ENCODE measurements at regions of chr17 and their contacts with region 1.

Region 1: DNA sequence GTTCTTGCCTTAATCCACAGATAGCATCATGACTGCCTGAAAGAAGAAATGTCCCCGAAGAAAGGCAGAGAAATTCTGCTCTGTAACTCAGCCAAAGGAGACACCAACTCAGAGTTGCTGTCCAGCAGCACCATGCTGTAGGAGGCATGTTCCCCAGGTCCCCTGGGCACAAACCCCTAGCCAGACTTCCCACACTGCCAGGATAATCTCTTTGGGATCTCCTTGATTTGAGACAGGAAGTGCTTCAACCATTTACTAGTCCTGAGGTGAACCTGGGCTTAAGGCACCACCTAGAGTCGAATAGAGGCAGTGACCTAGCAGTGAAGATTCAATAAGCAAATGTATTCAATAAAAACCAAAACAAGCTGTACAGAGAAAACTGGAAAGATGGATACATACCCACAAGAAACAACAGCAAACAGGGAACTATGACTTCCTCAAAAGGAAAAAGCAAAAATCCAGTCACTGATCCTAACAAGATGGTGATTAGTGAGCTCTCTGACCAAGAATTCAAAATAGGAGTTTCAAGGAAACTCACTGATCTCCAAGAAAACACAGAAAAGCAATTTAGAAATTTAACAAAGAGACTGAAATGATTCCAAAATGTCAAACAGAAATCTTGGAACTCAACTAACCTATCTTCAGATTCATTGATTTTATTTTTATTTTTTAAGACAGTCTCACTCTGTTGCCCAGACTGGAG is 5.7 kb downstream of the OR4D2 start:
- DNase-seq: no peak
- H3K4me3 ChIP-seq: no peak overlapping the region
- H3K27ac ChIP-seq: no peak overlapping the region
- H3K4me1 ChIP-seq: no peaks in the 10 kb centered on the region
- H3K27me3 ChIP-seq: peaks cover 0 to 20% of the 10 kb centered on the region in 2 donors
- CTCF ChIP-seq: peak in 1 of 3 donors; percentile 27
- POLR2A ChIP-seq: no peak

Region 2: DNA sequence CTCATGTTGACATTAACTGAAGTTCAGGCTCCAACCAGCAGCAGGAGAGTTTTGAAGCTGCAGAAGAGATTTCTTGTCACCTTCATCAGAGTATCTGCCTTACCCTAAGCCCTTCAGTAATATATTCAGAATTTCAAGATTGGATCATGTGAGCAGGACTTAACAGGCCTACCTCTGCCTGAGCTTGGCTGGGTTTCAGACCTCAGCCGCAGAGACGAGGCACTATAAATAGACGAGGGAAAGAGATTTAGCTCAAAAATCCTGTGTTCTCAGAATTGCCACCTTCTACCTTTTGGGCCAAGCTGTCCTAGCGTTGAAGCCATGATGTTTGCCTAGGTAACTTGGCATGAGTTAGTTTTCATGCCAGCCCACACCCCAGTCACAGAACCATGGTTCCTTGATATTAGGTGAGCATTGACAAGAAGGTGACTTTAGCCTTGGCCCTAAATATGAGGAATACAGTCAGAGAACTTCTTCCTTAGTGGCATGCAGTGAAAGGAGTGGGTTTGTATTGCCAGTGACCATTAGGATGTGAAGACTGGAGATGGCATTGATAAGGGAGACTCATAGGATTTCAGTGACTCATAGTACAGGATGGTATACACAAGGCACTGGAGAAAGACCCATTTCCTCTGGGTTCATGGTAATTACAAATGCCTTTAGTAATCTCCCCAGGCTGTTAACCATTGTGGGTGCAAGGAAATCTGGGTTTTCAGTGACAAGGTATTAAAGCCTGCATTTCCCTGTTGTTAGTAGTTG is 691.9 kb before region 1 on chr17:
- intact Hi-C with region 1: no loop called
- DNase-seq: peak in 1 of 2 donors; percentile 48
- H3K4me3 ChIP-seq: no peak overlapping the region
- H3K27ac ChIP-seq: peak overlapping the region; percentile 22 to 59
- H3K4me1 ChIP-seq: peaks cover 4 to 15% of the 10 kb centered on the region in 2 donors
- H3K27me3 ChIP-seq: no peaks in the 10 kb centered on the region
- CTCF ChIP-seq: no peak
- POLR2A ChIP-seq: no peak

Region 3: GRCh38 chr17:57499648-57500049 is 672.9 kb before region 1 on chr17:
- intact Hi-C with region 1: no loop called
- DNase-seq: no peak
- H3K4me3 ChIP-seq: no peak overlapping the region
- H3K27ac ChIP-seq: no peak overlapping the region
- H3K4me1 ChIP-seq: no peaks in the 10 kb centered on the region
- H3K27me3 ChIP-seq: no peaks in the 10 kb centered on the region
- CTCF ChIP-seq: no peak
- POLR2A ChIP-seq: no peak

Region 4: DNA sequence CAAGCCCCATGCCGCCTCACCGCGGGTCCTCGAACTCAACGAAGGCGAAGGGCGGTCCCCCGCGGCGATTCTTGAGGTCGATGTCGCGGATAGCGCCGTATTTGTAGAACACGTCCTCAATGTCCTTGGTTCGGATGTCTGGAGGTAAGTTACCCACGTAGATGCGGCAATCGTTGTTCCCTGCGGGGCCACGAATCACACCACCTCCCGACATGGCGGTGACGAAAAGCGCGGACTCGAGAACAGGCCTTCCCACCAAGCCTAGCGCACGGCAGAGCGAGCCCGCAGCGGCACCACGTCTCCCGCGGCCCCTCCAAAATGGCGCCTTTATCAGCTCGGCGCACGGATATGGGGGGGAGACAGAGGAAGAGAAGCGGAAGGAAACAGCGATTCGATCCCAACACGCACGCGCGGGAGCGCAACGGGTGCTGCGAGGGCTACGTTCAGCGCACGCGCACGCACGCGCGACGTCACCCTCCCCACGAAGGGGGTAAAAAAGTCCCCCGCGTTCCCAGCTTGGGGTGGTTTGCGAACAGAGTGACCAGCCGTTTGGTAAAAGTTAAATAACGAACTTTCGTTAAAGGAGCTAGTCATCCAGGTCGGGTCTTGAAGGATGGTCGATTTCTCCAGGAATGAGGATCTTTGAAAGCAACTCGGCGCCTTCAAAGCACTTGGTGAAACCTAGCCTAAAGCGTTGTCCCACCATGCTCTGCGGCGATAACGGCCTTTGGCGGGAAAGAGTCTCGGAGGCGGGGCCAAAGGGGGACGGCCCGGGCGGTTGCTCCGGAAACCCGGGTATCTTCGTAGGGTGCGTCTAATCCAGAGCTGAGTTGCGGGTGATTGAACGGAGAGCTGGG is 165.4 kb before region 1 on chr17 and contains the start of gene SRSF1:
- intact Hi-C with region 1: no loop called
- DNase-seq: peak; percentile 94 to 96
- H3K4me3 ChIP-seq: peak within 1 kb of the TSS; percentile 96 to 100 (median 97)
- H3K27ac ChIP-seq: peak within 1 kb of the TSS; percentile 100
- H3K4me1 ChIP-seq: peaks cover 7 to 9% of the 10 kb centered on the region in 2 donors
- H3K27me3 ChIP-seq: no peaks in the 10 kb centered on the region
- CTCF ChIP-seq: no peak
- POLR2A ChIP-seq: peak; percentile 97
- total RNA-seq, gene SRSF1: 176 to 202 (median 185) TPM

Region 5: DNA sequence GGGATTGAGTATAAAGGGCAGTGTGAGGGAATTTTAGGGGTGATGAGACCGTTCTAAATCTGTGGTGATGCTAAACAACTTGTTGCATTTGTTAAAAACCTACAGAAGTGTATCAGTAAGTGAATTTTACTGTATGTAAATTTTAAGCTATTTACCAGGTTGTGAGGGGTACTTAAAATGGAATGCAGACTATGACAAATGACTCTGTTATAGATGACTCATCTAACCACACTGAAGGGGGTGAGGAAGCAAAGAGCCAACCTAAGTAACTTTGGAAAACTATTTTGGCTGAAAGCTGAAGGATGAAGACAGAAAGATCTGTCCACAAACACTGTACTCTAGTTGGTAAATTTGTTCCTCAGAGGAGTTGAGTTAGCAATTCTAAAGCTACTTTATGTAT is 51.8 kb after region 1 on chr17:
- intact Hi-C with region 1: loop called (anchors 2 kb)
- DNase-seq: no peak
- H3K4me3 ChIP-seq: no peak overlapping the region
- H3K27ac ChIP-seq: no peak overlapping the region
- H3K4me1 ChIP-seq: no peaks in the 10 kb centered on the region
- H3K27me3 ChIP-seq: peaks cover 0 to 3% of the 10 kb centered on the region in 2 donors
- CTCF ChIP-seq: no peak
- POLR2A ChIP-seq: no peak

Region 6: DNA sequence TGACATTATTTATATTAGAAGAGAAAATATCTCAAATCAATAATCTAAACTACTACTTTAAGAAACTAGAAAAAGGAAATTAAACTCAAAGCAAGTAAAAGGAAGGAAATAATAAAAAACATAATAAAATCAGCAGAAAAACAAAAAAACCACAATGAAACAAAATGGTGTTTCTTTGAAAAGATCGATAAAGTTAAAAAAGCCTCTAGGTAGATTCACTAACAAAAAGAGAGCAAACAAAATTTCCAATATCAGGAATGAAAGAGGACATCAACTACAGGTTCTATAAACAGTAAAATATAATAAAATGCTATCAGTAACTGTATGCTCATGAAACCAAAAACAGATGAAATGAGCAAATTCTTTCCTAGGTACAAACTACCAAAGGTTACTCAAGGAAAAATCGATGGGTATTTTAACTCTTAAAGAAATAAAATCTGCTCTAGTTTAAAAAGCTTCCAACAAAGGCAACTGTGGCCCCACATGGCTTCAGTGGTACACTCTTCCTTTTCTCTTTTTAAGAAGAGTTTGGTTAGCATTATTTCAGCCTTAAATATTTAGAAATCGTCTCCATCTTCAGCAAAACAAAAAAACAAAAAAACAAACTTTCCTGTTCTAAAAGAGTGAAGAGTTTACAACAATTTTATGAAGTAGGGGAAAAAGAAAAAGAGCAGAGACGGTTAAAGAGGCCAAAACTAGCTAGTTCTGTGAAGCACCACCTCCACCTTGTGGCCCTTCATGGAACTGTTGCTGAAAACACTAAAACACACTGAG is 832.0 kb after region 1 on chr17:
- intact Hi-C with region 1: no loop called
- DNase-seq: peak in 1 of 2 donors; percentile 46
- H3K4me3 ChIP-seq: no peak overlapping the region
- H3K27ac ChIP-seq: no peak overlapping the region
- H3K4me1 ChIP-seq: no peaks in the 10 kb centered on the region
- H3K27me3 ChIP-seq: no peaks in the 10 kb centered on the region
- CTCF ChIP-seq: peak; percentile 93 to 96 (median 95)
- POLR2A ChIP-seq: no peak

Measured in breast epithelium (tissue), 4 donors.